Ascending aorta (tissue), 2 donors: ENCODE measurements at regions of chr15 and their contacts with region 1.

Region 1: GRCh38 chr15:90352109-90352893 is at the start of gene ZNF774:
- DNase-seq: peak; percentile 84 to 96
- H3K4me3 ChIP-seq: peak within 1 kb of the TSS; percentile 59 to 94
- H3K27ac ChIP-seq: peak within 1 kb of the TSS; percentile 45 to 87
- H3K4me1 ChIP-seq: no peaks in the 10 kb centered on the region
- H3K27me3 ChIP-seq: no peaks in the 10 kb centered on the region
- CTCF ChIP-seq: no peak
- total RNA-seq, gene ZNF774: 0.21 TPM

Region 2: DNA sequence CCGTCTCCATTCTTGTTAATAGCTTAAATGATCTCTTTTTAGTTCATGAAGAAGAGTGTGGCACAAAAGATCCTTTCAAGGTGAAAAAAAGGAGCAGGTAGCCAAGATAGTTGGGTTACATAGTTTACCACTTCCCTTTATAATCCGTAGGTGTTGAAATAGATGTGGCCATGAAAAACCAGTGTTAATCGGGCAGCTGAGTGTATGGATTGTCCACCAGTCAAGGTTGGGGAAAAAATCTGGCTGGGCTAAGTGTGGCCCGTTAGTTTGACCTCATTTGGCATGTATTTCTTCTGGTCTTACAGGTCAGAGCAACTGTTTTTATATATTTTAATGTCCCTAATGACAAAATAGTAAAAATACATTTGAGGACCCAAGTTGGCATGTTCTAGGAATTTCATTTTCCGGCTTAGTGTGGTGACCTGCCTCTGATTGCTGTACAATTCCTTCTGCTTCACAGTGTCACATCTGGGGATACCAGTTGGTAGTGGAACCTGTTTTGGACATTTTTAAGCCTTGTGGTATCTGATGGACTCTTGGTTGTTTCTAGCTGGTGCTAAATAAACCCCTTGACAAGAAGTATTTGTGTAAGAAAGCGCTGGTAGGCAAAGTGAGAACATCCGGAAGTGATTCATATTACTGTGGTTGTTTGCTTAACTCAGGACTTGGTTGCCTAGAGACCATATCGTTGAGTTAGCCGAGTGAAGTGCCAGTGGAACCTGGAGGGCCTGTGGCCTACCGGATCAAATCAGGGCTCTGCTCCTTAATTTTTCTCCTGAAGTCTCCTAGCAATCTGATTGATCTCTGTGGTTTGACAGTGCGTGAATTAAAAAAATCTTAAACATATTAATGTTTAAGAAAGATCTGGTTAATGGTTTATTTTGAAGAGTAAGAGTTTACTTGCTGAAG is 48.4 kb after region 1 on chr15:
- intact Hi-C with region 1: loop called (anchors 5 kb)
- DNase-seq: peak; percentile 44 to 91
- H3K4me3 ChIP-seq: peak overlapping the region; percentile 27 to 36
- H3K27ac ChIP-seq: peak overlapping the region; percentile 89 to 91
- H3K4me1 ChIP-seq: peaks cover 24 to 82% of the 10 kb centered on the region in 2 donors
- H3K27me3 ChIP-seq: no peaks in the 10 kb centered on the region
- CTCF ChIP-seq: no peak

Region 3: GRCh38 chr15:90489514-90489913 is 137.2 kb after region 1 on chr15:
- intact Hi-C with region 1: no loop called
- DNase-seq: no peak
- H3K4me3 ChIP-seq: no peak overlapping the region
- H3K27ac ChIP-seq: no peak overlapping the region
- H3K4me1 ChIP-seq: no peaks in the 10 kb centered on the region
- H3K27me3 ChIP-seq: no peaks in the 10 kb centered on the region
- CTCF ChIP-seq: no peak